ENCODE measurements at regions of chr3 and their contacts with region 1.

Region 1: DNA sequence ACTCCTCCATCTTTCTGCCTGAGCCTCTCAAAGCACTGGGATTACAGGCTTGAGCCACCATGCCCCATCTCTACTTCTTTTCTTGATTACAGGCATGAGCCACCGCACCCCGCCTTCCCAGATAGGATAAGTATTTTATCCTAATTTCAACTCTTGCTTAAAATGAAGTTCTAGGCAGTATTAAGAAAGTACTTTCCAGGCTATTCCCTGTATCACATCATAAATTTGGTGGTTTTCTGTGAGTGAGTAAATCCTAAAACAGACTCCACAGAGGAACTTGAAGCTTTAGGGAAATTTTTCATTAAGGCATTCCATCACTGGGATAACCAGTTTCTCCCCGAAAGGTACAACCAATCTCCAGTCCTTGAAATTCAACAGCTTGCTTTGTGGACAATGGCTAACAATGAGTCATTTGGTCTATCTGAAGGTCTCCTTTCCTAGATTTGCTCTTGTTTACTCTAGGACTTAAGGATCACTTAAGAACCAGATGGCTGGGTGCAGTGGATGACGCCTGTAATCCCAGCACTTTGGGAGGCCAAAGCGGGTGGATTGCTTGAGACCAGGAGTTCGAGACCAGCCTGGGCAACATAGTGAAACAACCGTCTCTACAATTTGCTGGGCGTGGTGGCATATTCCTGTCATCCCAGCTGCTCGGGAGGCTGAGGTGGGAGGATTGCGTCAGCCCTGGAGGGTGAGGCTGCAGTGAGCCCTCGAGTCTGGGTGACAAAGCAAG is 49.7 kb upstream of the SKIL start:
- DNase-seq: no peak
- ATAC-seq: no peak
- H3K4me3 ChIP-seq: no peak overlapping the region
- H3K27ac ChIP-seq: no peak overlapping the region; the same call in 1 of the 2 replicates
- H3K4me1 ChIP-seq: no peaks in the 10 kb centered on the region
- H3K27me3 ChIP-seq: no peaks in the 10 kb centered on the region
- CTCF ChIP-seq: no peak

Region 2: DNA sequence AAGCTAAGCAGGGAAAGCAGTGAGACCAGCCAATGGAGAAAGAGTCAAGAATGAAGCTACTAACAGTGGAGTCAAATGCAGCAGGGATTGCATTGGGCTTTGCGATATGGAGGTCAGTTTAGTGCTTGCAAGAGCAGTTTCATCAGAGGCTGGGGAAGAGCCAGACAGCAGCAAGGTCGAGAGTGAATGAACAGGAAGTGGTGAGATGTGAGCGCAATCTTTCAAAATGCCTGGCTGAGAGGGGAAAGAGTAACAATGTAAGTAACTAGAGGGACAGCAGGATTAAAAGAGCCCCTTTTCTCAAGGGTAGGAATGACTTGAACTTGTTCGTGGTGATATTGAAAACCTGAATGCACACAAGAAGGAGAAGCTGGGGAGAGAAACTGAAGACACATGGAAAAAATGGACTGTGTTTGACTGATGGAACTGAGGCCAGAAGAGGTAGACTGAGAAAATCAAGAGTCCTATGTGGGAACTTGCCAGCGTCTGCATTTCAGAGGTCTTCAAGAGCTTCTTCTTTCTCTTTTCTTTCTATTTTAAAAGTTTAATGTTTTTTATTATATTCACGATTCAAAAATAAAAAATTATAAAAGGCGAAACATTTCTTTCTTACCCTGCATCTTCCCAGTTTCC is 300.7 kb before region 1 on chr3:
- CTCF ChIA-PET with region 1: no interaction called
- POLR2A ChIA-PET with region 1: no interaction called
- in situ Hi-C with region 1: no loop called
- intact Hi-C with region 1: no loop called
- DNase-seq: no peak
- ATAC-seq: no peak
- H3K4me3 ChIP-seq: no peak overlapping the region
- H3K27ac ChIP-seq: no peak overlapping the region
- H3K4me1 ChIP-seq: no peaks in the 10 kb centered on the region
- H3K27me3 ChIP-seq: no peaks in the 10 kb centered on the region
- CTCF ChIP-seq: no peak

Region 3: GRCh38 chr3:170321321-170322034 is 13.6 kb after region 1 on chr3:
- CTCF ChIA-PET with region 1: interaction called, 4 read pairs
- POLR2A ChIA-PET with region 1: interaction called, 12 read pairs
- in situ Hi-C with region 1: no loop called
- intact Hi-C with region 1: no loop called
- DNase-seq: no peak
- ATAC-seq: no peak
- H3K4me3 ChIP-seq: no peak overlapping the region
- H3K27ac ChIP-seq: no peak overlapping the region
- H3K4me1 ChIP-seq: peaks cover 4% of the 10 kb centered on the region; the same call in 1 of the 2 replicates
- H3K27me3 ChIP-seq: no peaks in the 10 kb centered on the region
- CTCF ChIP-seq: no peak

Region 4: DNA sequence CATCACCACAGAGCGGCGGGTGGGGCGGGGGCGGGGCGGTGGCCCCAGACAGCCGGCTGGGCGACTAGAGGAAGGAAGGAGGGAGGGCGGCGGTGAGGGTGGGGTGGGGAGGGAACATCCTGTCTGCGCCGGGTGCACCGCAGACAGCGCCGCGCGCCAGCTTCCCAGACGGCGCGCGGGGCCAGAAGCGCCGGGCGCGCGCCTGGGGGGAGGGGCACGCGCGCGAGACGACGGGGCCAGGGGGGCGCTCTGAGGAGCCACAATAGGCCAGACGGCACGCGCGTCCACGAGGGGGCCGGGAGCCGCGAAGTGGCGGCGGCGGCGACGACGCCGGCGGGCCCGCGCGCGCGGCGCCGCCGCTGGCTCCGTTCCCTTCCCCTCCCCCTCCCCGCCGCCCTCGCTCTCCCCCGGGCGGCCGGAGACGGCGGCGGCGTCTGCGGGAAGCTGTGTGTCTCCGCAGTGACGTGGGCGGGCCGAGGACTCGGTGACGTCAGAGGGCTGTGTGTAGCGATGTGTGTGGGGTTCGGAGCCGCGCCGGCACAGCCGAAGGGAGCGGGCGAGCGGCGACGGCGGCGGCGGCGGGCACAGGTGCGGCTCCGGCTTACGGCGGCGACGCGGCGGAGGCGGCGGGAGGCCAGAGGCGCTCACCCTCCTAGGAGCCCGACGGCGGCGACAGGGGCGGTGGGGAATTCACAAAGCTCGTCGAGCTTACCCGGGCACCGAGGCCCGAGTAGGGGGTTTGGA is 49.5 kb after region 1 on chr3 and contains the start of gene SKIL:
- CTCF ChIA-PET with region 1: no interaction called
- POLR2A ChIA-PET with region 1: no interaction called
- in situ Hi-C with region 1: no loop called
- intact Hi-C with region 1: loop called (anchors 2 kb)
- DNase-seq: peak; percentile 58
- ATAC-seq: peak; percentile 92
- H3K4me3 ChIP-seq: peak within 1 kb of the TSS; percentile 79 to 87
- H3K27ac ChIP-seq: peak within 1 kb of the TSS; percentile 99
- H3K4me1 ChIP-seq: peaks cover 36% of the 10 kb centered on the region
- H3K27me3 ChIP-seq: no peaks in the 10 kb centered on the region
- CTCF ChIP-seq: no peak; the same call in 1 of the 2 replicates
- total RNA-seq, gene SKIL: 94.2 TPM

Region 5: GRCh38 chr3:170811928-170812591 is 504.2 kb after region 1 on chr3:
- CTCF ChIA-PET with region 1: no interaction called
- POLR2A ChIA-PET with region 1: no interaction called
- in situ Hi-C with region 1: no loop called
- intact Hi-C with region 1: loop called (anchors 2 kb)
- DNase-seq: peak; percentile 73
- ATAC-seq: peak; percentile 82
- H3K4me3 ChIP-seq: no peak overlapping the region
- H3K27ac ChIP-seq: no peak overlapping the region
- H3K4me1 ChIP-seq: peaks cover 7% of the 10 kb centered on the region; the same call in 1 of the 2 replicates
- H3K27me3 ChIP-seq: no peaks in the 10 kb centered on the region
- CTCF ChIP-seq: peak; percentile 95

Region 6: GRCh38 chr3:170848292-170848917 is 540.6 kb after region 1 on chr3:
- CTCF ChIA-PET with region 1: no interaction called
- POLR2A ChIA-PET with region 1: no interaction called
- in situ Hi-C with region 1: no loop called
- intact Hi-C with region 1: loop called (anchors 2 kb)
- DNase-seq: no peak
- ATAC-seq: 0 out of 2 replicates have a peak, but pooled peaks have one; percentile 63
- H3K4me3 ChIP-seq: no peak overlapping the region
- H3K27ac ChIP-seq: no peak overlapping the region
- H3K4me1 ChIP-seq: no peaks in the 10 kb centered on the region
- H3K27me3 ChIP-seq: peaks cover 6% of the 10 kb centered on the region
- CTCF ChIP-seq: peak; percentile 69; the same call in 1 of the 2 replicates

Measured in Panc1 (cell line).